ENCODE measurements at regions of chr12 and their contacts with region 1.

Region 1: DNA sequence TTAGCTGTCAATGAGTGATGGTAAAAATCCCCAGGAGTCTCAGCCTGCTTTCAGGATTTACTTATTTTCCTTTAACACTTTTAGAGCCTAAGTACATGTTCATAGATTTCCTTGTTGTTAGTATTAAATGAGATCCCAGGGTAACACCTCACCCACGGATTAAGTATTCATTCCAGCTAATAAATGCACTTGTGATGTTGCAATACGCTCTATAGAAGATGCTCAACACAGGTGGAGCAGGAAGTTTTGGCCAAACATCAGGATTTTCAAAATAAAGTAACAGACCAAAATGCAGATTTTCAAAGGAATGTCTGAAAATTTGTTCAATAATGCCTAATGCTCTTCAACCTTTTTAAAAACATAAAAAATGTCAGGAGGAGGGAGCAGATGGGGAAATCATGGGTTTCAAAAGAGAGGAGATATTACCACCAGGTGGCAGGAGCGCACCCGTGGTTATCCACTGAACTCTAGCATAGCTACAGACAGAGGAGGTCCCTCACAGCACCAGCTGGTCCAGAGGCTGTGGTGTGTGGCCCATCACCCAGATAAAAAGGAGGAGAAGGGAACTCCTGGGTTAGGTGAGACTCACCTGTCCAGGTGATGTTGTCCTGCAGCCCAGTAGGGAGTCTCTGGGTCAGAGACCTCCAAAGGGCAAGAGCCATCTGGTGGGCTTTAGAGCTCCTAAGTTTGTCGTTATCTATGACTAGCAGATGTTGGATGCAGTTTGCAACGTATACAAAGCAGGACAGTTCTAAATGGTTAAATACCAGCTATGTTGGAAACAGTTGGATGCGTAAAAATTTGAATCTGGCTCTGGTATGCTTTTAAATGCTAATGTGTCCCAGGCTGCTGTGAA is 1158.4 kb upstream of the TMEM132C start:
- DNase-seq: peak; percentile 87
- ATAC-seq: peak; percentile 87
- H3K4me3 ChIP-seq: no peak overlapping the region
- H3K27ac ChIP-seq: 0 out of 2 replicates have a peak overlapping the region, but pooled peaks have one; percentile 0
- H3K4me1 ChIP-seq: peaks cover 26% of the 10 kb centered on the region
- H3K27me3 ChIP-seq: no peaks in the 10 kb centered on the region
- CTCF ChIP-seq: peak; percentile 94

Region 2: GRCh38 chr12:126784328-126784921 is 324.2 kb before region 1 on chr12:
- CTCF ChIA-PET with region 1: no interaction called
- POLR2A ChIA-PET with region 1: no interaction called
- intact Hi-C with region 1: loop called (anchors 5 kb)
- DNase-seq: peak; percentile 81
- ATAC-seq: peak; percentile 84
- H3K4me3 ChIP-seq: no peak overlapping the region
- H3K27ac ChIP-seq: no peak overlapping the region
- H3K4me1 ChIP-seq: no peaks in the 10 kb centered on the region
- H3K27me3 ChIP-seq: peaks cover 76% of the 10 kb centered on the region
- CTCF ChIP-seq: peak; percentile 95

Region 3: GRCh38 chr12:127025545-127025944 is 83.0 kb before region 1 on chr12:
- CTCF ChIA-PET with region 1: no interaction called
- POLR2A ChIA-PET with region 1: no interaction called
- intact Hi-C with region 1: loop called (anchors 1 kb)
- DNase-seq: peak; percentile 60
- ATAC-seq: peak; percentile 83
- H3K4me3 ChIP-seq: no peak overlapping the region
- H3K27ac ChIP-seq: no peak overlapping the region
- H3K4me1 ChIP-seq: no peaks in the 10 kb centered on the region
- H3K27me3 ChIP-seq: no peaks in the 10 kb centered on the region
- CTCF ChIP-seq: peak; percentile 72

Region 4: DNA sequence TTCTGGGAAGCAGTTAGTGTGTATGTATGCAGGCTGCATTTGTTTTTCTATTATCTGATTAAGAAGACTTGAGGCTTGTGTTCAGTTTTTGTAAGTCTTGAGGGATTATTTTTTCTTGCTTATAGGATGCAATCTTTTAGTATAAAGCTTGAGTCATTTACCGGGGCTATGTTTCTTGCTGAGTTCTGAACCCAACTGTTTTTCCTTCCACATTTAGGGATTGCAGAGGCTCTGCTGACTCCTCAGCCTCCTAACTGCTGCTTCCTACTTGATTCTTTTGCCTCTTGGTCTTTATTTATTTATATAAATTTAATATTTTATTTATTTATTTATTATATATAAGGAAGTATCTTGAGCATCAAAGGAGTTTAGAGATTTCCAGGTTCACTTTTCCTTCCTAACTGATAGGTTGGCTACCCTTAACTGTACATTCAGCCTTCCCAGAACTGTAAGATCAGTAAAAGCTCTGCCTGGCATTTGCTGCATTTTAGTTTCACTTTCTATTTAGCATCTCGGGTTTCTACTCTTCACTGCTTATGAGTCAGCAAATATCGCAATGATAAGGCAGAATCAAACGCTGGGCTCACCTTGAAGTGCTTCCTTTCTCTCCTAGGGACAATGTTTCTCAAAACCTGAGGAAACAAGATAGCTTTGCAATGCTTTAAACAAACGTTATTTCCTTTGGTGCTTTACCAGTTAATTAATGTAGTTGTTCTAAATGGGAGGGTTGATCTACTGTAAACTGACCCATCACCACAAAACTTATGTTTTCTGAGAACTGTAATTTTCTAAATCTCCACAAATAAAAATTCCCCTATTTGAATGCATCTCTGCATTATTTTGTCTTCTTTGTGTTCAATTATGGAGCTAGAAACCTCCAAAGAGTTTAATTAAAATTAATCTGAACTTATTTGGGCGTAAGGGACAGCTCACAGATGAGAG is 25.3 kb before region 1 on chr12:
- CTCF ChIA-PET with region 1: no interaction called
- POLR2A ChIA-PET with region 1: interaction called, 3 read pairs
- intact Hi-C with region 1: loop called (anchors 2 kb)
- DNase-seq: peak; percentile 91
- ATAC-seq: peak; percentile 66
- H3K4me3 ChIP-seq: peak overlapping the region; percentile 60
- H3K27ac ChIP-seq: peak overlapping the region; percentile 70
- H3K4me1 ChIP-seq: peaks cover 40% of the 10 kb centered on the region
- H3K27me3 ChIP-seq: no peaks in the 10 kb centered on the region
- CTCF ChIP-seq: no peak

Region 5: GRCh38 chr12:127150028-127150427 is 41.4 kb after region 1 on chr12:
- CTCF ChIA-PET with region 1: no interaction called
- POLR2A ChIA-PET with region 1: no interaction called
- intact Hi-C with region 1: loop called (anchors 1 kb)
- DNase-seq: no peak
- ATAC-seq: no peak
- H3K4me3 ChIP-seq: no peak overlapping the region
- H3K27ac ChIP-seq: no peak overlapping the region
- H3K4me1 ChIP-seq: no peaks in the 10 kb centered on the region
- H3K27me3 ChIP-seq: no peaks in the 10 kb centered on the region
- CTCF ChIP-seq: no peak

Region 6: GRCh38 chr12:127355061-127355841 is 246.7 kb after region 1 on chr12:
- CTCF ChIA-PET with region 1: interaction called, 6 read pairs
- POLR2A ChIA-PET with region 1: no interaction called
- intact Hi-C with region 1: loop called (anchors 1 kb)
- DNase-seq: peak; percentile 76
- ATAC-seq: peak; percentile 96
- H3K4me3 ChIP-seq: no peak overlapping the region
- H3K27ac ChIP-seq: no peak overlapping the region
- H3K4me1 ChIP-seq: peaks cover 6% of the 10 kb centered on the region; the same call in 1 of the 2 replicates
- H3K27me3 ChIP-seq: no peaks in the 10 kb centered on the region
- CTCF ChIP-seq: peak; percentile 93

Region 7: GRCh38 chr12:127381048-127381668 is 272.6 kb after region 1 on chr12:
- CTCF ChIA-PET with region 1: interaction called, 11 read pairs
- POLR2A ChIA-PET with region 1: no interaction called
- intact Hi-C with region 1: loop called (anchors 2 kb)
- DNase-seq: peak; percentile 85
- ATAC-seq: peak; percentile 68
- H3K4me3 ChIP-seq: peak overlapping the region; percentile 65
- H3K27ac ChIP-seq: no peak overlapping the region
- H3K4me1 ChIP-seq: peaks cover 32% of the 10 kb centered on the region
- H3K27me3 ChIP-seq: no peaks in the 10 kb centered on the region
- CTCF ChIP-seq: peak; percentile 98